Esophagus muscularis mucosa (tissue), 4 donors: ENCODE measurements at regions of chr14 and their contacts with region 1.

Region 1: GRCh38 chr14:75040507-75040906 is 10.8 kb downstream of the MLH3 start:
- DNase-seq: no peak
- H3K4me3 ChIP-seq: no peak overlapping the region
- H3K27ac ChIP-seq: no peak overlapping the region
- H3K4me1 ChIP-seq: peaks cover 3 to 37% (median 34%) of the 10 kb centered on the region in 4 donors
- H3K27me3 ChIP-seq: no peaks in the 10 kb centered on the region
- CTCF ChIP-seq: no peak
- EP300 ChIP-seq: no peak
- POLR2A ChIP-seq: no peak

Region 2: DNA sequence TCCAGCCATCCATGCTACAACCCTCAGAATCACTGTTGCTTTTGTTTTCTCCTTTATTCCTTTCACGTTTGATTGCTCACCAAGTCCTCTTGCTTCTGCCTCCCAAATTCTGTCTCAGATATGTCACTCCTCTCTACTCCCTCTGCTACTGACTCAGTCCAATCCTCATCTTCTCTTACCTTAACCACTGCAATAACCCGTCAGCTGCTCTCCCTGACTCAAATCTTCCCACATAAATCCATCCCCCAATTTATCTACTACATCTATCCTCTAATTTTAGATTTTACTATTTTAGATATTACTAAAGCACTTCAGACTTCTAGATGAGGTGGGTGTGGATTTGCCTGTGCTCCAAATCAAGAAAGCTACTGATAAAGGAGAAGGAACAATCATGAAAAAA is 14.6 kb before region 1 on chr14:
- intact Hi-C with region 1: loop called (anchors 1 kb)
- DNase-seq: no peak
- H3K4me3 ChIP-seq: no peak overlapping the region
- H3K27ac ChIP-seq: no peak overlapping the region
- H3K4me1 ChIP-seq: no peaks in the 10 kb centered on the region
- H3K27me3 ChIP-seq: no peaks in the 10 kb centered on the region
- CTCF ChIP-seq: no peak
- EP300 ChIP-seq: no peak
- POLR2A ChIP-seq: no peak